K562 (cell line): ENCODE measurements at regions of chr3 and their contacts with region 1.

Region 1: DNA sequence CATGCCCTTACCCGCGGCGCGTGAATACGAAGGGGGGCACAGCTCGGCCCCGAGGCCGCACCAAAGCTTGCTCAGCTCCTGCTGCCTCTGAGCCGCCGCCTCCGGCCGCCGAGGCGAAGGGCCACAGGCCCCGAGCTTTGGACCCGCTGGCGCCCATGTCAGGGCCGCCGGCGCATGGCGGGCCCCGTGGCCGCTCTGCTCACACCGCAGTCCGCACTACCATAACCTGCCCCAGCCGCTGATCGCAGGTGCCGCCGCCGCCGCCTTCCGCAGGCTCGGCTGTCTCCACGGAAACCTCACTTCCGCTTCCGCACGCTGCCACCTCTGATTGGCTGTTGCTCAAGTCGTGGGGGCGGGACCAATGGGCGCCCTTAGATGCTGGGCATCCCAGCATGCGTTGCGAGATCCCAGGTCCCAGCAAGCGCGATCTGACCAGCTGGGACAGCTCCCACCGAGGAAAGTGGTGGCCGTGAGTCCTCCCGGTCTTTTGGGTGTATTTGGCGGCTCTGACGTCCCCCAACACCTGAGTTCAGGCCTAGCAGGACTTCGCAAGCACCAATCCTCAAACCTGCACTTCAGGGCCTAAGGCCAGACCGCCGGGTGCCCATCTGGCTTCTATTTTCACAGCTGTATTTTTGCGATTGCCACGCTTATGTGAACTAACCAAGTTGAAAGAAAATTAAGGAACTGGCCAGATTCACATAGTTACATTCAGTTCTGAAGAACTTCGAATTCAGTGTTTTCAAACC is at the start of gene TUSC2:
- DNase-seq: peak; percentile 88 to 97 (median 92)
- ATAC-seq: peak; percentile 91
- H3K4me3 ChIP-seq: peak within 1 kb of the TSS; percentile 84
- H3K27ac ChIP-seq: peak within 1 kb of the TSS; percentile 54
- H3K4me1 ChIP-seq: peaks cover 12 to 25% of the 10 kb centered on the region in 2 experiments; a peak in 4 of 5 replicates
- H3K27me3 ChIP-seq: no peaks in the 10 kb centered on the region
- CTCF ChIP-seq: no peak
- EP300 ChIP-seq: no peak
- POLR2A ChIP-seq: peak; percentile 63; the same call in 1 of the 2 replicates
- RAD21 ChIP-seq: no peak
- polyA plus RNA-seq, gene TUSC2: 2.8 to 4.4 TPM

Region 2: DNA sequence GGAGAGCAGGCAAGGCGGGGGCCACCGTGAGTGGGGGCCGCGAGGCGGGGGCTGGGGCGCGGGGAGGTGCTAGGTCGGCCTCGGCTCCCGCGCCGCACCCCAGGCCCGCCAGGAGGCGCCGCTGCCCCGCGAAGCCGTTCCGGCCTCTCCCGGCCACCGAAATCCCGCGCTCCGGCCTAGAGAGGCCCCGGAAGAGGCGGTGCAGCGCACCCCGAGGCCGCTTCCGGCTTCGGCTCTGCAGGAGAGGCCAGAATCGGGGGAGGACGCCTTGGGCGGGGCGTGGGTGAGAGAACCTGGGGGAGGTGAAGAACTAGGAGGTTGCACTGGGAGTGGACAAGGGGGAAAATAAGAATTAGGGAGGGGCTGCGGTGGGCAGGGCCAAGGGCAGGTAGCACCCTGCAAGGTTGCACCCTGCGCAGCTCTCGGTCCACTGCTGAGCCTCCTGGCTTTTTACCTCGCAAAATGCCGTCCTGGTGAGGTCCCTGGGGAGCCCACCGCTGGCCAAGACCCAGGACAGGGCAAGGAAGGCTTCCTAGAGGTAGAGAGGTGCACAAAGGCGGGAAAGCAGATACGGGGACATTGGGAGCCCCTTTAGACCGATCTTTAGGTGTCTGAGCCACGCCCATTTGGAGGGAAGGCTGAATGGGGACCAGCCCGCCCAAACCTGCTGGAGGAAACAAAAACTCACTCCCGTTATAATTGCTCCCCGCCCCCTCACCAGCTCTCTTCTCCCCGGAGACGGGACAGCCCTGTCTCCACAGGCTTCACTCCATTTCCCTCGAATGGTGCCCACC is 100.5 kb before region 1 on chr3:
- CTCF ChIA-PET with region 1: interaction called, 6 read pairs
- POLR2A ChIA-PET with region 1: no interaction called
- in situ Hi-C with region 1: no loop called
- intact Hi-C with region 1: loop called (anchors 1 kb)
- DNase-seq: peak; percentile 88 to 96 (median 90)
- ATAC-seq: peak; percentile 94
- H3K4me3 ChIP-seq: peak overlapping the region; percentile 47
- H3K27ac ChIP-seq: peak overlapping the region; percentile 82
- H3K4me1 ChIP-seq: peaks cover 18 to 43% of the 10 kb centered on the region in 2 experiments
- H3K27me3 ChIP-seq: no peaks in the 10 kb centered on the region
- CTCF ChIP-seq: peak; percentile 64 to 94 (median 84)
- EP300 ChIP-seq: no peak
- POLR2A ChIP-seq: 0 out of 2 replicates have a peak, but pooled peaks have one; percentile 48
- RAD21 ChIP-seq: peak; percentile 96 to 97

Region 3: DNA sequence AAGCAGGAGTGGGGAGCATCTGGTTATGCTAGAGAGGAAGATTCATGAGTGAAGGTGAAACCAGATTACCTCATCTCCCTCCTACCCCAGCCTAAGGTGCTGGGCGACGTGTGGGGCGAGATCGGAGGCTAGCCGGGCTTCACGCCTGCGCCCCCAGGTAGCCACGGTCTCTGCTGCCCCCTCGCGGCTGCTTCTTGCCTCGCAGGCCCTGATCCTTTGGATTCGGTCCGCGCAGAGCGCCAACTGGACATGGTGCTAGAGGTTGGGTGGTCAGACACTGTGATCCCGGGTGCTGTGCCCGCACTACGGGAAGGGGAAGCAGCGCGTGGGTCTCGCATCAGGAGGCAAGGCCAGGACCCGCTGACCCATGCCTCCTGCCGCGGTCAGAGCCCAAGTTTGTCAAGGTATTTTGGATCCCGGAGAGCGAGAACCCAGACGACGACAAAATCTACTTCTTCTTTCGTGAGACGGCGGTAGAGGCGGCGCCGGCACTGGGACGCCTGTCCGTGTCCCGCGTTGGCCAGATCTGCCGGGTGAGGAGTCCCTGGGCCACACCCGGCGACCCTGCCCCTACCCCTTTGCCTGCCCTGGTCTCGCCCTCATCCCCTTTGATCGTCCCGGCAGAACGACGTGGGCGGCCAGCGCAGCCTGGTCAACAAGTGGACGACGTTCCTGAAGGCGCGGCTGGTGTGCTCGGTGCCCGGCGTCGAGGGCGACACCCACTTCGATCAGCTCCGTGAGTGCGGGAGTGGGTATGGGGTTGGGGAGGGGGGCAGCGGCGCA is 55.0 kb before region 1 on chr3:
- CTCF ChIA-PET with region 1: interaction called, 6 read pairs
- POLR2A ChIA-PET with region 1: interaction called, 4 read pairs
- in situ Hi-C with region 1: no loop called
- intact Hi-C with region 1: loop called (anchors 1 kb)
- DNase-seq: peak; percentile 87 to 92 (median 88)
- ATAC-seq: peak; percentile 90
- H3K4me3 ChIP-seq: peak overlapping the region; percentile 28
- H3K27ac ChIP-seq: no peak overlapping the region
- H3K4me1 ChIP-seq: peaks cover 4 to 61% of the 10 kb centered on the region in 2 experiments; a peak in 3 of 5 replicates
- H3K27me3 ChIP-seq: no peaks in the 10 kb centered on the region
- CTCF ChIP-seq: peak; percentile 89 to 94 (median 94)
- EP300 ChIP-seq: no peak
- POLR2A ChIP-seq: no peak
- RAD21 ChIP-seq: peak; percentile 97 to 98

Region 4: DNA sequence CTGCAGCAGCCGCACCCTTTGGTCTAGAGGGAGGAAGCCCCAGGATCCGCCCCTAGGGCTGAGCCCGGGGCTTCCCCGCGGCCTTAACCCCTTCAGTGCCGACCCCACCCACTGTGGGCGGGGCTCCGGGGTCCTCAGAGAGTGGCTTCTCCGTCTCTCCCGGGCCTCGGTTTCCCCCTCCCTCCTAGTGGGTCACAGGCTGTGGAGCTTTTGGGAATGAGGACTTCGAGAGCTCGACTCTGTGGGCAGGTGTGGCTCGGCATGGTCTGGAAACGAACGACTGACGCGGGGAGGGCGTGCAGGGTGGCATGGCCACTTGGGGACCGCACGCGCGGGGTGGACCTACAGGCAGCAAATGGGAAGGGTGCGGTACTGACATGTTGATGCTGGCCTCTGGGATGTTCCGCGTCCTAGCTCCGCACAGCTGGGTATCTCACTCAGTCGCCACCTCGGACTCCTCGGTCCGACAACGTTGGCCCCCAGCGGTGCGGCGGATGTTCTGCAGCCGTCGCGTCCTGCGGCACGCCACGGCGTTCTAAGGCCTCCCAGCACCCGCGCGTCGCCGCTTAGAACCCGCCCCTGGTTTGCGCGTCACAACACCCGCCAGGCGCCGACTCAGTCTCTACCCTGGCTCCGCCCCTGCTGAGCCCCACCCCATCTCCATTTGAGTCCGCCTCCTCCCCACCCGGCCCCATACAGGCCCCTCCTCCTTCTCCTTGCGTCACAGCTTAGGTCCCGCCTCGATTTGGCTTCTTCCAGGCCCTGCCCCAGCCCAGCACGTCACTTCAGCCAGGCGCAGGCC is 29.1 kb before region 1 on chr3 and contains the starts of genes HYAL3 and NAA80:
- CTCF ChIA-PET with region 1: no interaction called
- POLR2A ChIA-PET with region 1: interaction called, 5 read pairs
- in situ Hi-C with region 1: no loop called
- intact Hi-C with region 1: loop called (anchors 2 kb)
- DNase-seq: peak; percentile 89 to 97 (median 93)
- ATAC-seq: peak; percentile 85
- H3K4me3 ChIP-seq: peak within 1 kb of the TSS; percentile 83
- H3K27ac ChIP-seq: peak within 1 kb of the TSS; percentile 99
- H3K4me1 ChIP-seq: peaks cover 22 to 72% of the 10 kb centered on the region in 2 experiments; a peak in 4 of 5 replicates
- H3K27me3 ChIP-seq: no peaks in the 10 kb centered on the region
- CTCF ChIP-seq: peak; percentile 38 to 44 (median 41); a peak in 4 of 6 replicates
- EP300 ChIP-seq: no peak
- POLR2A ChIP-seq: peak; percentile 76
- RAD21 ChIP-seq: no peak
- polyA plus RNA-seq, gene HYAL3: 0.38 to 1.0 TPM
- polyA plus RNA-seq, gene NAA80: 0.82 to 1.7 TPM